PC-9 (cell line): ENCODE measurements at regions of chr15 and their contacts with region 1.

Region 1: GRCh38 chr15:78909791-78910228 is 35.0 kb downstream of the CTSH start:
- DNase-seq: no peak
- H3K4me3 ChIP-seq: no peak overlapping the region
- H3K27ac ChIP-seq: no peak overlapping the region
- H3K4me1 ChIP-seq: peaks cover 22% of the 10 kb centered on the region
- H3K27me3 ChIP-seq: no peaks in the 10 kb centered on the region
- CTCF ChIP-seq: peak; percentile 84

Region 2: DNA sequence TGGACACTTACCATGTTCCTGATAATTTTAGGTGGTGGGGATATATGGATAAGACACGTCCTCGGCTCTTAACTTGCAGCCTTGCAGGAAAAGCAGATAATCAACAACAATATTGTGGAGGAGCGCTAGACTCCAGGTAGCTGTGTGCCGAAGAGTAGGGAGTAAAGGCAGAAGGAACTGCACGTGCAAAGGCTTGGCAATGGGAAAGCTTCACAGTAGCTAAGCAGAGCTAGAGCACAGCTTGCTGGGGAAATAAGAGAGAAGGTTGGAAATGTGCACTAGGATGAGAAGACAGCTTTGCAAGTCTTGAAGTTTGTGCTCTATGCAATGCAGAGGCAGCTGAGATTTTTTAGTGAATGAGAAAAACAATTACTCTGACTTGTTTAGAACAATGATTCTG is 357.2 kb before region 1 on chr15:
- CTCF ChIA-PET with region 1: no interaction called
- POLR2A ChIA-PET with region 1: interaction called, 10 read pairs
- intact Hi-C with region 1: no loop called
- DNase-seq: no peak
- H3K4me3 ChIP-seq: no peak overlapping the region
- H3K27ac ChIP-seq: no peak overlapping the region
- H3K4me1 ChIP-seq: no peaks in the 10 kb centered on the region
- H3K27me3 ChIP-seq: no peaks in the 10 kb centered on the region
- CTCF ChIP-seq: no peak

Region 3: DNA sequence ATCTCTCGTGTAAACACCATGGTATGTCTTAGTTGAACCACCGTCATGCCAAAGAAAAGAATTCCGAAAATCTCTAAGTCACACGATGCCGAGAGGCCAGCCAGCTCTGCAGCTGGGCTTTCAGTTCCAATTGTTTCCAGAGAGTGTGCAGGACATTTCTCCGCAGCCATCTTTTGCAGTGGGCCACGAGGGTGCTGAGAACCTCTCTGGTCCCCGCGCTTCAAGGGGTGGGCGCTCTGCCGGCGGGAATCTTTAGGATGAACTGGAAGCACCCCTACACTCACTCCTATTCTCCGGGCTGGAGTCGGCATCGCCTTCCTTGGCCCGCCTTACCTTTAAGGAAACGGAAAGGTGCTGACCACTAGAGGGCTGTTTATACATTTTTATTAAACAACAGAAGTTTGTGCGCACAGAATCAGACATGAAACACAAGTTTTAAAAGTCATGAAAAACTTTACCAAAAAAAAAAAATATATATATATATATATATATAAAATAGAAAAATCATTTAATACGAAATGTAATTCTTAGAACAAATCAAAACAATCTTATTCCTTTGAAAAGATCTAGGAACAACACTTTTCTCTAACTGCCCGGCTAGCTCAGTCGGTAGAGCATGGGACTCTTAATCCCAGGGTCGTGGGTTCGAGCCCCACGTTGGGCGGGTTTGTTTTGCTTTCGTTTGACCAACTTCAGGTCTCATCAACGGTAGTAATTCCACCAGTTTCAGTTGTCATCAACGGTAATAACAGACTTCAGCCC is 49.7 kb before region 1 on chr15:
- CTCF ChIA-PET with region 1: no interaction called
- POLR2A ChIA-PET with region 1: no interaction called
- intact Hi-C with region 1: no loop called
- DNase-seq: peak; percentile 75 to 76
- H3K4me3 ChIP-seq: peak overlapping the region; percentile 62
- H3K27ac ChIP-seq: peak overlapping the region; percentile 49
- H3K4me1 ChIP-seq: no peaks in the 10 kb centered on the region
- H3K27me3 ChIP-seq: no peaks in the 10 kb centered on the region
- CTCF ChIP-seq: peak; percentile 61

Region 4: DNA sequence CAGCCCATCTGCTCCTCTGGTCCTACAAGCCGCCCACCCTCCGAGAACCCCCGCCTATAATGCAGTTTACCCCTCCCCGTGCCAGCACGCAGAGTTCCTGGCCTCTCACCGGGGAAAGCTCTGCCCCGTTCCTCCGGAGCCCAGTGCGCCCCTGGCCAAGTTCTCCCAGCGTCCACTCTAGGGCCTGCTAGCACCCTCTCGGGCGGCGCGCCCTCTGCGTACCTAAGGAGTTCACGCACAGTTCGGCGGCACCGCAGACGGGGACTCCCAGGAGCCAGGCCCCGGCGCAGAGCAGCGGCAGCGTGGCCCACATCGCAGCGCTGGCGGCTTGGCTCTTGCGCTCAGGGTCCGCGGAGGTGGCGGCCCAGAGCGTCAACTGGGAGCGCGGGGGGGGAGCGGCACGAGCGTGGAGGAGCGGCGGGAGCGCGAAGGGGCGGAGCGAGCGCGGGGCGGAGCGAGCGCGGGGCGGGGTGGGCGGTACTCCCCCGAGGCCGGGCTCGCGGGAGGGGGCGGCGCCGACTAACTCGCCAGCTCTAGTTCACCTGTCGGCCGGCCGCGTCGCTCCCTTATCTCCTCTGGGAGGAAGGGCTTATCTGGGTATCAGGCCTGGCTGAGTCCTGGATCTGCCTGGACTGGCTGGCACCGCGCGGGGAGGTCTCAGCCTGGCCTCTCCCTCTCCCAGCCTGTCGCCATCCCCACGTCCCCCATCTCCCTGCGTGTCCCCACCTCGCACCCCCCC is 35.0 kb after region 1 on chr15 and contains the start of gene CTSH:
- CTCF ChIA-PET with region 1: no interaction called
- POLR2A ChIA-PET with region 1: no interaction called
- intact Hi-C with region 1: no loop called
- DNase-seq: peak; percentile 60 to 83
- H3K4me3 ChIP-seq: peak within 1 kb of the TSS; percentile 58
- H3K27ac ChIP-seq: no peak within 1 kb of the TSS
- H3K4me1 ChIP-seq: peaks cover 29% of the 10 kb centered on the region
- H3K27me3 ChIP-seq: no peaks in the 10 kb centered on the region
- CTCF ChIP-seq: no peak
- total RNA-seq, gene CTSH: 101 and 128 TPM in 2 replicates

Region 5: GRCh38 chr15:78979456-78980320 is 69.9 kb after region 1 on chr15:
- CTCF ChIA-PET with region 1: interaction called, 4 read pairs
- POLR2A ChIA-PET with region 1: no interaction called
- intact Hi-C with region 1: loop called (anchors 5 kb)
- DNase-seq: peak; percentile 62 to 63
- H3K4me3 ChIP-seq: no peak overlapping the region
- H3K27ac ChIP-seq: no peak overlapping the region
- H3K4me1 ChIP-seq: peaks cover 5% of the 10 kb centered on the region
- H3K27me3 ChIP-seq: no peaks in the 10 kb centered on the region
- CTCF ChIP-seq: peak; percentile 87

Region 6: DNA sequence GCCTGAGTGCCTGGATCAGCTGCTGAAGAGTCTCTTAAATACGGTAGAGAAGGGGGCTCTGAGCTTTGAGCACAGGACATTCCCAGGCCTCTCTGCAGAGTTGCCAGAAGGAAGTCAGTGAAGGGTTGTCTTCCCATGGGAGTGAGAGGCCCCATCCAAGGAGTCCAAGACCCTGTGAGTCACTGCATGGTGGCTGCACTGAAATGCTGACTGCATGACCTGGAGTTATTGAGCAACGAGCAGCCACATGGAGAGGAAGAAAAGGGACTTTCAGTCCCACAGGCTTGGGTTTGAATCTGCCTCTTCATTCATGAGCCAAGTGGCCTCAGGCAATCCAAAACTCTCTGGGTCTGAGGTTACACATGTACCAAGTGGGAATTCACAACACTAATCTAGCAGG is 250.4 kb after region 1 on chr15:
- CTCF ChIA-PET with region 1: no interaction called
- POLR2A ChIA-PET with region 1: no interaction called
- intact Hi-C with region 1: no loop called
- DNase-seq: no peak
- H3K4me3 ChIP-seq: no peak overlapping the region
- H3K27ac ChIP-seq: no peak overlapping the region
- H3K4me1 ChIP-seq: peaks cover 42% of the 10 kb centered on the region
- H3K27me3 ChIP-seq: no peaks in the 10 kb centered on the region
- CTCF ChIP-seq: no peak